Right ventricle myocardium inferior (tissue), 1 donor: ENCODE measurements at regions of chr10 and their contacts with region 1.

Region 1: DNA sequence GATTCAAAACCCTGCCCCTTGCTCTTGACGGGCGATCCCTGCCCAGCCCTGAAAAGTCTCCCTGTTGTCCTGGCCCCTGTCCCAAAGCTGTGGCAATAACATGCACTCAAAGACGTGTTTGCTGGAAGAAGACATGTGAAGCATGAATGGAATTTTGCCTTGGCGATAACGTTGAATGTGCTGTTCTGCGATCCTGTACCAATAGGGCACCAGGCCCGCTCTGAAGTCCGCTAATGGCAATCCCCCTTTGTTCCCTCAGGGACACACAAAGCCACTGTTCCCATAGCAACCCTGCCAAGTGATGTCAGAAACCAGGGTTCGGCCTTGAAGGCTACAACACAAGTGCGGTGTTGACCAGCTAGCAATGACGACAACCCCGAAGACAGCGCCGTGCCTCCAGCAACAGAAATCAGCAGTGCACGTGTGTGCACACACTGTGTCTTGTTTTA is 284.6 kb downstream of the KLF6 start:
- DNase-seq: peak; percentile 80
- ATAC-seq: peak; percentile 93

Region 2: GRCh38 chr10:3570855-3571266 is 70.4 kb after region 1 on chr10:
- intact Hi-C with region 1: loop called (anchors 2 kb)
- DNase-seq: no peak
- ATAC-seq: peak; percentile 41

Region 3: GRCh38 chr10:3595736-3596135 is 95.3 kb after region 1 on chr10:
- intact Hi-C with region 1: no loop called
- DNase-seq: no peak
- ATAC-seq: no peak

Region 4: DNA sequence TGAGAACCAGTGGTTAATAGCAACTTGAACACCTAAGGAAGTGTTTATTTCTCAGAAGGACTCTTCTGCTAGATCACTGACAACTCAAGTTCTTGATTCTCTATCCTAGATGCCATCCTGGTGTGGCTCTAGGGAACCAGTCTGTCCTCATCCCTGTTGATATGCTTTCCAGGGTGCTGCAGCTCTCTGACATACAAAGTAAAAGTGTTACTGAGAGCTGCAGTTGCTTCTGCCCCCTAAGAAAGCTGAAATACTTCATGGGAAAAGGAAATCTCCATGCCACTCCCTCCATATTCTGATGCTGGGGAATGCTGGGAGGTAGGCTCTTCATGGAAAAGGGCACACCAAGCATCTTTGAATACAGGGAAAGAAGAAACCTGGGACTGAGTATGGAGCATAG is 116.4 kb after region 1 on chr10:
- intact Hi-C with region 1: no loop called
- DNase-seq: no peak
- ATAC-seq: no peak

Region 5: GRCh38 chr10:3647074-3647473 is 146.6 kb after region 1 on chr10:
- intact Hi-C with region 1: loop called (anchors 10 kb)
- DNase-seq: no peak
- ATAC-seq: no peak